T-cell (primary cell): ENCODE measurements at regions of chr4 and their contacts with region 1.

Region 1: DNA sequence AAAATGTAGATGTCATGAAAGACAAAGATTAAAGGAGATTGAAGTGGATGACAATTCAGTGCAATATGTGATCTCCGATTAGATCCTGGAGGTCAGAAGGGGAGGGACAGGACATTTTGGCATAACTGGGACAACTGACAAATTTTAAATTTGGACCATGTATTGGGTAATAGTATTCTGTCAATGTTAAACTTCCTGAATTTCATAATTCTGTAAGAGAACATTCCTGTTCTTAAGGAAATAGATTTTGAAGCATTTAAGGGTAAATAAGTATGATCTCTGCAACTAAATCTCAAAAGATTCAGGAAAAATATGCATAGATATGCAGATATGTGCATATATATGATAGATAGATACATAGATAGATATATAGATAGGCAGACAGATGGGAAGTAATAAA is 11.0 kb downstream of the ODAPH start:
- DNase-seq: no peak
- ATAC-seq: no peak
- H3K4me3 ChIP-seq: no peak overlapping the region
- H3K4me3 Mint-ChIP-seq: no peak overlapping the region
- H3K27ac ChIP-seq: no peak overlapping the region
- H3K27ac Mint-ChIP-seq: no peak overlapping the region
- H3K4me1 ChIP-seq: no peaks in the 10 kb centered on the region
- H3K4me1 Mint-ChIP-seq: peaks cover 0 to 4% (median 0%) of the 10 kb centered on the region in 3 donors
- H3K27me3 ChIP-seq: no peaks in the 10 kb centered on the region
- H3K27me3 Mint-ChIP-seq: peaks cover 11 to 21% of the 10 kb centered on the region in 2 donors

Region 2: GRCh38 chr4:75708218-75708691 is 141.3 kb after region 1 on chr4:
- CTCF ChIA-PET with region 1: interaction called, 3 to 11 read pairs
- POLR2A ChIA-PET with region 1: interaction called in 1 of 2 experiments, 5 read pairs
- DNase-seq: peak in 33 of 35 experiments; percentile 14 to 75 (median 44)
- ATAC-seq: peak; percentile 66 to 94 (median 74)
- H3K4me3 ChIP-seq: no peak overlapping the region
- H3K4me3 Mint-ChIP-seq: no peak overlapping the region
- H3K27ac ChIP-seq: no peak overlapping the region
- H3K27ac Mint-ChIP-seq: no peak overlapping the region
- H3K4me1 ChIP-seq: peaks cover 0 to 3% of the 10 kb centered on the region in 2 experiments
- H3K4me1 Mint-ChIP-seq: peaks cover 5 to 7% (median 6%) of the 10 kb centered on the region in 3 donors
- H3K27me3 ChIP-seq: no peaks in the 10 kb centered on the region
- H3K27me3 Mint-ChIP-seq: no peaks in the 10 kb centered on the region

Region 3: GRCh38 chr4:77418333-77419038 is 1851.6 kb after region 1 on chr4:
- CTCF ChIA-PET with region 1: interaction called in 1 of 2 experiments, 11 read pairs
- POLR2A ChIA-PET with region 1: no interaction called
- DNase-seq: peak in 1 of 35 experiments; percentile 8
- ATAC-seq: peak in 1 of 4 experiments; percentile 29
- H3K4me3 ChIP-seq: no peak overlapping the region
- H3K4me3 Mint-ChIP-seq: no peak overlapping the region
- H3K27ac ChIP-seq: no peak overlapping the region
- H3K27ac Mint-ChIP-seq: no peak overlapping the region
- H3K4me1 ChIP-seq: no peaks in the 10 kb centered on the region
- H3K4me1 Mint-ChIP-seq: no peaks in the 10 kb centered on the region
- H3K27me3 ChIP-seq: no peaks in the 10 kb centered on the region
- H3K27me3 Mint-ChIP-seq: peaks cover 5 to 11% of the 10 kb centered on the region in 2 donors